A673 (cell line): ENCODE measurements at regions of chr5 and their contacts with region 1.

Region 1: GRCh38 chr5:32794086-32794485 is 83.0 kb downstream of the NPR3 start:
- DNase-seq: no peak
- H3K4me3 ChIP-seq: no peak overlapping the region
- H3K27ac ChIP-seq: no peak overlapping the region
- H3K4me1 ChIP-seq: no peaks in the 10 kb centered on the region
- H3K27me3 ChIP-seq: no peaks in the 10 kb centered on the region
- CTCF ChIP-seq: peak; percentile 26; the same call in 1 of the 2 replicates

Region 2: GRCh38 chr5:33008751-33009418 is 214.8 kb after region 1 on chr5:
- CTCF ChIA-PET with region 1: no interaction called
- POLR2A ChIA-PET with region 1: interaction called, 13 read pairs
- intact Hi-C with region 1: no loop called
- DNase-seq: no peak
- H3K4me3 ChIP-seq: no peak overlapping the region
- H3K27ac ChIP-seq: no peak overlapping the region
- H3K4me1 ChIP-seq: no peaks in the 10 kb centered on the region
- H3K27me3 ChIP-seq: no peaks in the 10 kb centered on the region
- CTCF ChIP-seq: no peak

Region 3: DNA sequence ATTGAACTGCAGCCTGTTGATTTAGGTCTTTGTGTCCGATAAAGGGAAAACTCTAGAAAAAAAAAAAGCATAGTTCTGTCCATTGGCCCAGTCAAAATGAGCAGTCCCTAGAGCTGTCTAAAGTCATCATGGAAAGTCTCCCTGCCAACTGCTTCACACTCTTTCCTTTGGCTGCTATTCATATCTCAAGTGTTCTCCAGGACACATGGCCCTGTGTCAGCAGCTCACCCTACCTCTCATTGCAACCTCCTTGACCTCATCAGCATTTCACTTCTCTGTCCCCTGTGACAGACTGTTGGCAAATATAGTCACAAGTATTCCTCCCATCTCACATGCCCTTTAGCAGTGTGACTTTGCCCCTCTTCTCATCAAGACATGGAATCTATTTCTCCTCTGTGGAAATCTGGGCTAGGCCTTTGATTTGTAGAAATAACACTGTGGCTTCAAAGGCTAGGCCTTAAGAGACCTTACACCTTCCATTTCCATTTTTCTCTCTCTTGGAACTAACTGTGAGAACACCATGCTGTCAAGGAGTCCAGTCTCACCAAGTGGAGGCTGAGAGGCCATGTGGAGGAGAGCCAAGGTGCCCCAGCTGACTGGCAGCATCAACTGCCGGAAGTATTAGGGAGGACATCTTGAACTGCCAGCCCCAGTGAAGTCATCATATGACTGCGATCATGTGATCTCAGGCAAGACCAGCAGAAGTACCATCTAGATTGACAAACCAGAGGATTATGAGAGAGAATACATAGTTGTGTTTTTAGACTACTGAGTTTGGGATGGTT is 497.3 kb after region 1 on chr5:
- CTCF ChIA-PET with region 1: no interaction called
- POLR2A ChIA-PET with region 1: no interaction called
- intact Hi-C with region 1: no loop called
- DNase-seq: no peak
- H3K4me3 ChIP-seq: no peak overlapping the region
- H3K27ac ChIP-seq: no peak overlapping the region
- H3K4me1 ChIP-seq: no peaks in the 10 kb centered on the region
- H3K27me3 ChIP-seq: no peaks in the 10 kb centered on the region
- CTCF ChIP-seq: no peak